Aorta (tissue), 5 donors: ENCODE measurements at regions of chr5 and their contacts with region 1.

Region 1: DNA sequence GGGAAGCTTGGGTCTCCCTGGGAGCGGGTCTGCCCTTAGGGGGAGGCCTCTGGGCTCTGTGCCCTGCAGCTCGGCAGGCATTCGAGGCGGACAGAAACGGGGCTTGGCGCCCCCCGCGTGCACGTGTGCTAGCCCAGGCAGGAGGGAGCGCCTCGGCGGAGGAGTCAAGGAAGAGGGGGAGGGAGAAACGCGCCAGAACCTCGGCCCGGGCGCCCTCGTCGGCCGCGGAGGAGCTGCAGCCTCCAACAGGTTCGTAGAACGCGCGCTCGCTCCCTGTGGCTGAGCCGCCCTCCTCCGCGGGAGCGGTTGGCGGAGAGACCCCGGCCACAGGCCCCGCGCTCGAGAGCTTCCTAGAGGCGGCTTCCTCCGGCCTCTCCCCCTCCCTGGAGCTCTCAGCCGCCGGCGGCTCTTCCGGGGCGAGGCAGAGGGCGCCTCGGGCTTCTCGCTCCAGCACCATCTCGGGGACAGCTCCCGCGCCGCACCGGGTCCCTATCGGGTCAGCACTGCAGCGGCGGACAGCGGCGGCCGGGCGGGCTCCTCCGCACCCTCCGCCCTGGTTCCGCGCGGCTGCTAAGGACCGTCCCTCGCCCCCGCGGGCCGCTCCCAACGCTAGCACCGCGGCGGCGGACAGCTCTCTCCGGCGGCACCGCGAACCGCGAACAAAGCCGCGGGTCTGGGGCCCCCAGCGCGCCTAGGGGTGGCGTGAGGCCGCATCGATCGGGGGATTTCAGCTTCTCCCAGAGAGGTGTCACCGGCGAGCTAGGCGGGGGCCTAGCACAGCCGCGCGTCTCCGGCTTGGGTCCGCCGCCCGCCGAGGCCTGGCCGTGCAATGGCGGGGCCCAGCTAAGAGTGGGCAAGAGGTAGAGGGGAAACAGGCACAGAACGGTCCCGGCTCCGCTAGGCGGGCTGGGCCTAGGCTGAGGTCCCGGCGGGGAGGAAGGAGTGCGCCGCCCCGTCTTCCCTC is 74.6 kb upstream of the CPLX2 start:
- DNase-seq: peak; percentile 86 to 94
- ATAC-seq: peak; percentile 92
- H3K4me3 ChIP-seq: no peak overlapping the region
- H3K27ac ChIP-seq: no peak overlapping the region
- H3K4me1 ChIP-seq: no peaks in the 10 kb centered on the region
- H3K27me3 ChIP-seq: no peaks in the 10 kb centered on the region

Region 2: DNA sequence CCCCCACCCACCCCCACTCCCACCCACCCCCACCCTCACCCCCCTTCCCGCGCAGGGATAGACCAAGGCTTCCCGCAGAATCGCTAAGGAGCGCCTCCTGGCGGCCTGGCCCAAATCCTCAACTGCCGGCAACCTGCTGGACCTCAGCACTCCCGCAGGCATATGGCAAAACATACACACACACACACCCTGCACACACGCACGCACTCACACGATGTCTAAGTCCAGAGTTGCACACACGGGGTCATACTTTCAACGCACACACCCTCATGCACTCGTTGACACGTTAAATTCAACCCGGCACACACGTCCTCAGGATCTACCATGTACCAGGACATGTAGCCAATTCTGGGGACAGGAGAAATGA is 76.3 kb after region 1 on chr5:
- intact Hi-C with region 1: loop called in 1 of 2 experiments (anchors 5 kb)
- DNase-seq: no peak
- ATAC-seq: no peak
- H3K4me3 ChIP-seq: no peak overlapping the region
- H3K27ac ChIP-seq: no peak overlapping the region
- H3K4me1 ChIP-seq: no peaks in the 10 kb centered on the region
- H3K27me3 ChIP-seq: no peaks in the 10 kb centered on the region